ENCODE measurements at regions of chr5 and their contacts with region 1.

Region 1: GRCh38 chr5:96896806-96897205 is 20.5 kb downstream of the ERAP2 start:
- DNase-seq: peak; percentile 86
- ATAC-seq: peak; percentile 97
- H3K4me3 ChIP-seq: peak overlapping the region; percentile 24 to 65 (median 45)
- H3K4me3 Mint-ChIP-seq: peak overlapping the region; percentile 80
- H3K27ac ChIP-seq: peak overlapping the region; percentile 96 to 98
- H3K27ac Mint-ChIP-seq: peak overlapping the region; percentile 85
- H3K4me1 ChIP-seq: peaks cover 16 to 18% of the 10 kb centered on the region in 2 donors
- H3K4me1 Mint-ChIP-seq: peaks cover 32% of the 10 kb centered on the region
- H3K27me3 ChIP-seq: no peaks in the 10 kb centered on the region
- H3K27me3 Mint-ChIP-seq: no peaks in the 10 kb centered on the region
- CTCF ChIP-seq: no peak

Region 2: GRCh38 chr5:96876292-96876850 is 20.4 kb before region 1 on chr5 and contains the start of gene ERAP2:
- CTCF ChIA-PET with region 1: interaction called, 20 read pairs
- POLR2A ChIA-PET with region 1: interaction called, 5 read pairs
- intact Hi-C with region 1: loop called (anchors 1 kb)
- DNase-seq: peak; percentile 76
- ATAC-seq: peak; percentile 65
- H3K4me3 ChIP-seq: peak within 1 kb of the TSS; percentile 66 to 100 (median 84)
- H3K4me3 Mint-ChIP-seq: peak within 1 kb of the TSS; percentile 97
- H3K27ac ChIP-seq: peak within 1 kb of the TSS; percentile 69 to 75
- H3K27ac Mint-ChIP-seq: peak within 1 kb of the TSS; percentile 92
- H3K4me1 ChIP-seq: peaks cover 50 to 53% of the 10 kb centered on the region in 2 donors
- H3K4me1 Mint-ChIP-seq: peaks cover 74% of the 10 kb centered on the region
- H3K27me3 ChIP-seq: no peaks in the 10 kb centered on the region
- H3K27me3 Mint-ChIP-seq: no peaks in the 10 kb centered on the region
- CTCF ChIP-seq: no peak
- total RNA-seq, gene ERAP2: 74.2 and 76.5 TPM in 2 replicates

Region 3: DNA sequence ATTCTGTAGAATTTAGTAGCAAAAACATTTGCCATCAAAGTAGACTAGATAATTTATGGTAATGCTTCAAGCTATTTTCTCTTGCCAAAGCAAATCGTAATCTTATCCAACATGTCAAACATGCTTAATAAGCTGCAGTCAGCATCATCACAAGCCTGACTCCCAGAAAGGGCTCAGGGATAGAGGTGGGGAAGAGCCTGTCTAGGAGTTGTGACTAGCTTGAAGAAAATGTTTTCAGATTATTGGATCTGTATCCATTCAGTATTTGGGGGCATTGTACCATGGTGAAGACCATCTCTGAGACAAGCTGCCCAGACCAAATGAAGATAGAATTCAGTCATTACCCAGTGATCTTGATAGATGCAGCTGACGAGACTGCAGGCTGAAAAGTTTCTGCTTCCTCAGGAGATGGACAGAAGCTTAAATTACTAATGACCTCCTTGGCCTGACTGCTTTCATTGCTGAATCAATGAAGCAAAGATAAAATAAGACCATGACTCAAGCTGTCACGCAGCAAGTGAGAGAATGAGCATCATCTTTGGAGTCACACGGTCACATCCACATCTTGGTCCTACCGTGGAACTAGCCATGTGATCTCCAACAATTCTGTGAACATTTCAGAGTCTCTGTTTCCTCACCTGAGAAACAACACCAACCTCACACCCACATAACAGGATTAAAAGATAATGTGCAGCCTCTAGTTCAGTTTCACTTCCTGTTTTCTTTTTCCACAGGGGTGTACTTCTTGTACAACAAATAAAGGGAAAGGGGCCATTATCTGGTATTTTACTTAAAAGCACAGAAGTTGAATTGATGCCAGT is 11.1 kb before region 1 on chr5:
- CTCF ChIA-PET with region 1: interaction called, 6 read pairs
- POLR2A ChIA-PET with region 1: interaction called, 3 read pairs
- intact Hi-C with region 1: loop called (anchors 1 kb)
- DNase-seq: peak; percentile 86
- ATAC-seq: peak; percentile 79
- H3K4me3 ChIP-seq: peak overlapping the region in 2 of 5 experiments; percentile 5 to 27
- H3K4me3 Mint-ChIP-seq: peak overlapping the region; percentile 75
- H3K27ac ChIP-seq: peak overlapping the region; percentile 76 to 91
- H3K27ac Mint-ChIP-seq: peak overlapping the region; percentile 92
- H3K4me1 ChIP-seq: peaks cover 51 to 57% of the 10 kb centered on the region in 2 donors
- H3K4me1 Mint-ChIP-seq: peaks cover 56% of the 10 kb centered on the region
- H3K27me3 ChIP-seq: no peaks in the 10 kb centered on the region
- H3K27me3 Mint-ChIP-seq: no peaks in the 10 kb centered on the region
- CTCF ChIP-seq: no peak

Region 4: GRCh38 chr5:96963267-96963666 is 66.5 kb after region 1 on chr5:
- CTCF ChIA-PET with region 1: interaction called, 6 read pairs
- POLR2A ChIA-PET with region 1: interaction called, 7 read pairs
- intact Hi-C with region 1: loop called (anchors 1 kb)
- DNase-seq: peak; percentile 31
- ATAC-seq: peak; percentile 50
- H3K4me3 ChIP-seq: no peak overlapping the region
- H3K4me3 Mint-ChIP-seq: peak overlapping the region; percentile 60
- H3K27ac ChIP-seq: peak overlapping the region in 1 of 2 donors; percentile 86
- H3K27ac Mint-ChIP-seq: peak overlapping the region; percentile 63
- H3K4me1 ChIP-seq: peaks cover 41 to 60% of the 10 kb centered on the region in 2 donors
- H3K4me1 Mint-ChIP-seq: peaks cover 76% of the 10 kb centered on the region
- H3K27me3 ChIP-seq: no peaks in the 10 kb centered on the region
- H3K27me3 Mint-ChIP-seq: no peaks in the 10 kb centered on the region
- CTCF ChIP-seq: no peak